ENCODE measurements at regions of chr20 and their contacts with region 1.

Region 1: DNA sequence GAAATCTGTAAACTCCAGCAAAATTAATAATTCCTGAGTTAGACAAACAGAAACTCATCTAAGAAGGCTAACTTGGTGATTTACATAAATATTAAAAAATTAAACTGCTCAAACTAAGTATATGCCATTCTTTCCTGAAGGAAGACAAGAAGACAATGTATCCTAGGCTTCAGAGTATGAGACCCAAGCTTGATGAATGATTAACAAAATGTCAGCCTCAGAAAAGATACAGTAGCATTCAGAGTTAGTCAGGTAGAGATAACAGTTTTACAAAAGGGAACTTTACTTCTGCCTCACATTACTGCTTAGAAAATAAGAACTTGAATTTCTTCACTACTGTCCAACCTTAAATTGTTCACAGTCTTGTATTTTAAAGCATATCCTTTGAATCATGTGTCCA is 12.0 kb downstream of the CSNK2A1 start:
- DNase-seq: no peak
- ATAC-seq: no peak
- H3K4me3 ChIP-seq: no peak overlapping the region
- H3K27ac ChIP-seq: peak overlapping the region; percentile 38; the same call in 1 of the 3 replicates
- H3K4me1 ChIP-seq: peaks cover 9 to 23% of the 10 kb centered on the region in 2 experiments
- H3K27me3 ChIP-seq: no peaks in the 10 kb centered on the region
- CTCF ChIP-seq: no peak
- EP300 ChIP-seq: no peak
- POLR2A ChIP-seq: no peak
- RAD21 ChIP-seq: no peak

Region 2: DNA sequence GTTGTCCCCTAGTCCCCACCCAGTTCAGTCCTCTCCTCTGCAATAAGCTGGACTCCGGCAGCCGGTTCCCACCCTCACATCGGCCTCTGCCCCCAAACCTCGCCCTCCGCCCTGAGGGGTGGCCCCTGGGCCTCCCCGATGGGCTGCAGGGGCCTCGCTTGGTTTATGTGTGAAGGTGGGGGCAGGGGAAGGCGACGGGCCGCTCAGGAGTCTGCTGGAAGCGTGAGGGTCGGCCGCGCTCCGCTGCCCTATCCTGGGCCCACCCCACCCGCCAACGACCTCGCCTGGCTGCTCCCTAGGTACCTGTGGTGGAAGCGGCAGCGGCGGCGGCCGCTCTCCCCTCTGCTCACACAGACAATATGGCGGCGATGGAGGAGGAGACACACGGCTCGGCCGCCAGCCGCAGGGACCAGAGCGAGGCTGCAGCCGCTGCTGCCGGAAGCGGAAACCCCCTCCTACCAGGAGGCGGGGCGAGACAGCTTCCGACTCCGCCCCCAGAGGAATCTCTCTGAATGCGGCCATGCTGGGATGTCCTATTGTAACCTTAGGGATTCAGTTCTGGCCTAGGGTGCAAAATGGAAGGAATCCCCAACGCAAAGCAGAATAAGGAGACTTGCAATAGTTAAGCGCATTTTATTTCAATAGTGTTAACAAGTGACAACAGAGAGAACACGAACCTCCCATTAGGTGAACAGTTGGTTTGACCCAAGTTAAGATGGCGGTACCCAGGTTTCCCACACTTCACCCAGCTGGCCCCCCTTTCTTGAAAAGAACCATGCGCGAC is 12.0 kb after region 1 on chr20 and contains the start of gene CSNK2A1:
- CTCF ChIA-PET with region 1: no interaction called
- POLR2A ChIA-PET with region 1: interaction called, 12 read pairs
- in situ Hi-C with region 1: no loop called
- intact Hi-C with region 1: no loop called
- DNase-seq: peak; percentile 85 to 94 (median 88)
- ATAC-seq: peak; percentile 95
- H3K4me3 ChIP-seq: peak within 1 kb of the TSS; percentile 94
- H3K27ac ChIP-seq: peak within 1 kb of the TSS; percentile 96
- H3K4me1 ChIP-seq: peaks cover 0 to 53% of the 10 kb centered on the region in 2 experiments; a peak in 4 of 5 replicates
- H3K27me3 ChIP-seq: no peaks in the 10 kb centered on the region
- CTCF ChIP-seq: no peak
- EP300 ChIP-seq: no peak
- POLR2A ChIP-seq: peak; percentile 91
- RAD21 ChIP-seq: no peak
- polyA plus RNA-seq, gene CSNK2A1: 71.0 to 101 TPM

Measured in K562 (cell line).